Activated T-helper 1 cell treated with anti-CD3 and anti-CD28 coated beads, Interleukin-12 subunit alpha, Interleukin-12 subunit beta, Interleukin-2, Interleukin-4 antibody, amounts not matched to agents 30 ng/mL and 10 ng/mL and 1 ng/mL, durations not matched to agents 14 hours and 24 hours and 36 hours (primary cell): ENCODE measurements at regions of chr6 and their contacts with region 1.

Region 1: GRCh38 chr6:112780498-112781096 is 433.5 kb downstream of the RFPL4B start:
- DNase-seq: no peak
- H3K4me3 Mint-ChIP-seq: no peak overlapping the region
- H3K27ac Mint-ChIP-seq: no peak overlapping the region
- H3K4me1 Mint-ChIP-seq: no peaks in the 10 kb centered on the region
- H3K27me3 Mint-ChIP-seq: no peaks in the 10 kb centered on the region

Region 2: DNA sequence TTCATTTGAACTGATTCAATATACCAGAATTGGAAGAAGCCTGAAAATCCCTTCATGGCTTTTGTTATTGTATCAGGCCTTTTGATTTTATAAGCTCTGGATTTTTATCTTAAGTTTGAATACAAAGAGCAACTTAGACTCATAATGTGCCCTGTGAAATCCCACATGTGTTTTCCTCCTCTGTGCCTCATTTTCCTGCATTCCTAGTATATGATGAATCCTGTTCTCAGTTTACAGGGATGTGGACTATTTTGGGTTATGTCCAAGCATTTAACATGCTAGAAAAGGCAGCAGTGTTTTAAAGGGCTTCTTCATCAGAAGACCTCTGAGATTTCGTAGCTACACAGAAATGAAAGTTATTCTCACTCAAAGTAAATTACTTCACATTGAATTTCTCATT is 21.5 kb after region 1 on chr6:
- intact Hi-C with region 1: no loop called
- DNase-seq: no peak
- H3K4me3 Mint-ChIP-seq: no peak overlapping the region
- H3K27ac Mint-ChIP-seq: no peak overlapping the region
- H3K4me1 Mint-ChIP-seq: no peaks in the 10 kb centered on the region
- H3K27me3 Mint-ChIP-seq: no peaks in the 10 kb centered on the region

Region 3: GRCh38 chr6:113909234-113909856 is 1128.7 kb after region 1 on chr6:
- intact Hi-C with region 1: loop called (anchors 1 kb)
- DNase-seq: no peak
- H3K4me3 Mint-ChIP-seq: no peak overlapping the region
- H3K27ac Mint-ChIP-seq: no peak overlapping the region
- H3K4me1 Mint-ChIP-seq: no peaks in the 10 kb centered on the region
- H3K27me3 Mint-ChIP-seq: peaks cover 9% of the 10 kb centered on the region